ENCODE measurements at regions of chr19 and their contacts with region 1.

Region 1: GRCh38 chr19:47243776-47244547 is 12.4 kb upstream of the CCDC9 start:
- DNase-seq: peak; percentile 92
- CTCF ChIP-seq: peak; percentile 98

Region 2: GRCh38 chr19:47152224-47153017 is 91.5 kb before region 1 on chr19:
- in situ Hi-C with region 1: loop called (anchors 5 kb)
- DNase-seq: no peak
- CTCF ChIP-seq: no peak